ENCODE measurements at regions of chr9 and their contacts with region 1.

Region 1: GRCh38 chr9:5832543-5833529 is at the start of gene ERMP1:
- DNase-seq: peak; percentile 86 to 92
- H3K4me3 ChIP-seq: peak within 1 kb of the TSS; percentile 92 to 96
- H3K27ac ChIP-seq: peak within 1 kb of the TSS; percentile 67 to 86
- H3K4me1 ChIP-seq: peaks cover 0 to 22% (median 14%) of the 10 kb centered on the region in 4 donors
- H3K27me3 ChIP-seq: no peaks in the 10 kb centered on the region
- CTCF ChIP-seq: peak; percentile 83 to 85

Region 2: DNA sequence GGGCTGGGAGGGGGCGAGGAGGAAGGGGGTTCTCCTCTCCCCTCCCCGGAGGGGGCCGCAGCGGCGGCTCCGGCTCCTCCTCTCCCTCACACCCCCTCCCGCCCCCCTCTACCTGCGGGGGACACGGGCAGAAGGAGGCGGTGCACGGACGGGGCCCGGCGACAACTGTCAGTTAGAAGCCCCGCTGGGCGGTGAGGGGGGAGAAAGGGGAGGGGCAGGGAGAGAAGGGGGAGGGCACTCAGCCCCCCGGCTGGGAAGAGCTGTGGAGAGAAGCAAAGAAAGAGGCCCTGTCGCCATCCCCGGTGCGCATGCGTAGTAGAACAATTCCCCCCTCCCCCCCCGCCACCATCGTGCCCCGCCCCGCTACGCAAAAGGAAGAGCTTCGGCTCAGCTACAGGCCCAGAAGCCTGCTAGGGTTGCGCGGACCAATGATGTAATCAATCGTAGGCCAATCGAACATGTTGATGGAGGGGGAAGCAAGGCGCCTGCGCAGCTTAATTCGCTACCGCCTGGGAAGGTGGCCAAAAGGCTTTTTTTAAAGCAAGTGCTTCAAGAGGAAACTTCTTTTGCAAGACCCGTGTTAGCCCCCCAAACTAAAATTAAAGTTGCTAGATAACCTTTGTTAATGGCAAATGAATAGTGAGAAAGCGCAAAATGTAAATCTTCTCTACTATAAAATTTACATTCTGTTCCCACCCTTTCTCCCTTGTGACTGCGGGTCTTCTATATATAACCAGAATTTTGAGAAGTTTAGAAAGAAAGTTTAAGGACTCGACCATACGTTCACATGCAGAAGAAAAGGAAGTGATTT is 175.5 kb after region 1 on chr9:
- intact Hi-C with region 1: loop called (anchors 5 kb)
- DNase-seq: peak; percentile 97 to 98
- H3K4me3 ChIP-seq: peak overlapping the region; percentile 77 to 88
- H3K27ac ChIP-seq: peak overlapping the region; percentile 92 to 99
- H3K4me1 ChIP-seq: peaks cover 0 to 53% (median 18%) of the 10 kb centered on the region in 4 donors
- H3K27me3 ChIP-seq: no peaks in the 10 kb centered on the region
- CTCF ChIP-seq: no peak